Pancreas (tissue), 10 donors: ENCODE measurements at regions of chr9 and their contacts with region 1.

Region 1: GRCh38 chr9:135615666-135616618 is 23.4 kb downstream of the GLT6D1 start:
- DNase-seq: peak in 2 of 6 donors; percentile 46 to 48
- ATAC-seq: no peak
- H3K4me3 ChIP-seq: no peak overlapping the region
- H3K27ac ChIP-seq: no peak overlapping the region
- H3K4me1 ChIP-seq: no peaks in the 10 kb centered on the region
- H3K27me3 ChIP-seq: no peaks in the 10 kb centered on the region
- CTCF ChIP-seq: no peak

Region 2: DNA sequence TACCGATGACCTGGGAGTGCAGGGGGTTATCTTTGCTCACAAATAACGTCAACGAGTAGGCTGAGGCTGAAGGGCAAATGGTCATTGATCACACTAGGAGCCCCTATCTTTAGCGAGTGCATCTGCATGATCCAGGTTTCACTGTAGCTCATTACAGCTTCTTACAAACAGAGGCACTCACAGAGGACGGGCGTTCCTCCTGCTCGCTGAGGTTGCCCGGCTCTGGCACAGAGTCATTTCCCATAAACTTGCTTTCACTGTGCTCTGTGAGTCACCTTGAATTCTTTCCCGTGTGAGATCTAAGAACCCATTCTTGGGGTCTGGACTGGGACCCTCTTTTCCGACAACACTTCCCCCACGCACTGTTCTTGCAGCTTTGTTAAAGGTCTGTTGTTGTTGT is 56.3 kb before region 1 on chr9:
- intact Hi-C with region 1: loop called in 1 of 3 experiments (anchors 10 kb)
- DNase-seq: no peak
- ATAC-seq: no peak
- H3K4me3 ChIP-seq: no peak overlapping the region
- H3K27ac ChIP-seq: no peak overlapping the region
- H3K4me1 ChIP-seq: no peaks in the 10 kb centered on the region
- H3K27me3 ChIP-seq: peaks cover 0 to 6% (median 0%) of the 10 kb centered on the region in 4 donors
- CTCF ChIP-seq: no peak